ENCODE measurements at regions of chr17 and their contacts with region 1.

Region 1: DNA sequence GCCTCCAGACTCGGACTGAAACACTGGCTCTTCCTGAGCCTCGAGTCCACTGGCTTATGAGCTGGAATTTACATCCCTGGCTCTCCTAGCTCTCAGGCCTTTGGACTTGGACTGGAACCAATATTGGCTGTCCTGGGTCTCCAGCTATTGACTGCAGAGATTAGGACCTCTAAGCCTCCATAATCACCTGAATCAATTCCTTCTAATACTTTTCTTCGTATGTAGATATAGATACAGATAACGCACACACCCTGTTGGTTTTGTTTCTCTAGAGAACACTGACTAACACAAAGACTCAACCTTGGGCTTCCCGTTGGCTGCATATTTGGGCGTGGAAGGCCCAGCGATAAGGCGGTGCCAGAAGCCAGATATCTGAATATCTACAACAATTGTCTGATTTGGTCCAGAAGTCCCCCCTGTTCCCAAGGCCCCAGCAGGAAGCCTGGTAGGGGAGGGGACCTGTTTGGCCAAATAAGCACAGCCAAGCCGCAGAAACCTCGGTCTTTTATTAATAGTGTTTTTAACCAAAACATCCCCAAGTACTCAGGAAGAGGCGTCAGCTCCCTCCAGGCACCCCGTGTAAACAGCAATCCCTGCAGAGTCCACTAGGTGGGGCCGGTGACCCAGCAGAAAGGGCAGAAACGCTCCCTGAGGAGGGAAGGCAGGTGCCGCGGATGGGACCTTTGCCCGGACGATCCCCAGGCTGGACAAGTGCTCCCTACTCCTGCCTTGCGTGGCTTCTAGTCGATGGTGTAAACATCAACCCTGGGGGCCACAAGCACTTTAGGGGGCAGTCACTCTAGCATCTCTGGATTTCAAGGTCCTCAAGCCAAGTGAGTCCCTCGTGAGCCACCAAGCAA is 57.0 kb downstream of the ABR start:
- DNase-seq: peak; percentile 94

Region 2: GRCh38 chr17:1147661-1148060 is 24.9 kb after region 1 on chr17:
- intact Hi-C with region 1: loop called (anchors 1 kb)
- DNase-seq: no peak

Region 3: DNA sequence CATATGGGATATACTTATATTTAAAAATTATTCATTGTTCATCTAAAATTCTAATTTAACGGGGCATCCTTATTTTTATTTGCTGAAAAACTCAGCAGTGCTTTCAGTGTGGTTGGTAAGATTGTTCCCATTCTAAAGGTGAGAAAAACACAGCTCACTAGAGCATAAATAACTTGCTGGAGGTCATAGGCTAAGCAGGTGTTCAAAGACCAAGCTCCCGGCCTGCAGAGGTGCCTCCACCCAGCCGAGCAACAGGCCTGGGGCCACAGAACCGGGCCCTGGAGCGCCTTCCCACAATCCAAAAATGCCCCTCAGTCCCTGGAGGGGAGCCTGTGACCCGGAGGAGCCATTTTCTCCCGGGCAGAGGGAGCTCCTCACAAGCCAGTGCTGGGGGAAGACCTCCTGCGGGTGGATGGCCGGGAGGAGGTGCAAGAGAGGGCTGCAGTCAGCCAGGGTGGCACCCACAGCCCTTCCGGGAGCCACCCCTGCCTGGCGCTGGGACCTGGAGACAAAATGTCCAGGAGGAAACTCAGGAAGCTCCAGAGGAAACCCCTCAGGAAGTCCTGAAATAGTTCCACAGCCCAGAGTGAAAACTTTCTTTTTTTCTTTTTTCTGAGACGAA is 42.3 kb after region 1 on chr17:
- intact Hi-C with region 1: loop called (anchors 5 kb)
- DNase-seq: no peak

Region 4: GRCh38 chr17:1186923-1187771 is 64.4 kb after region 1 on chr17:
- intact Hi-C with region 1: loop called (anchors 1 kb)
- DNase-seq: peak; percentile 94

Region 5: DNA sequence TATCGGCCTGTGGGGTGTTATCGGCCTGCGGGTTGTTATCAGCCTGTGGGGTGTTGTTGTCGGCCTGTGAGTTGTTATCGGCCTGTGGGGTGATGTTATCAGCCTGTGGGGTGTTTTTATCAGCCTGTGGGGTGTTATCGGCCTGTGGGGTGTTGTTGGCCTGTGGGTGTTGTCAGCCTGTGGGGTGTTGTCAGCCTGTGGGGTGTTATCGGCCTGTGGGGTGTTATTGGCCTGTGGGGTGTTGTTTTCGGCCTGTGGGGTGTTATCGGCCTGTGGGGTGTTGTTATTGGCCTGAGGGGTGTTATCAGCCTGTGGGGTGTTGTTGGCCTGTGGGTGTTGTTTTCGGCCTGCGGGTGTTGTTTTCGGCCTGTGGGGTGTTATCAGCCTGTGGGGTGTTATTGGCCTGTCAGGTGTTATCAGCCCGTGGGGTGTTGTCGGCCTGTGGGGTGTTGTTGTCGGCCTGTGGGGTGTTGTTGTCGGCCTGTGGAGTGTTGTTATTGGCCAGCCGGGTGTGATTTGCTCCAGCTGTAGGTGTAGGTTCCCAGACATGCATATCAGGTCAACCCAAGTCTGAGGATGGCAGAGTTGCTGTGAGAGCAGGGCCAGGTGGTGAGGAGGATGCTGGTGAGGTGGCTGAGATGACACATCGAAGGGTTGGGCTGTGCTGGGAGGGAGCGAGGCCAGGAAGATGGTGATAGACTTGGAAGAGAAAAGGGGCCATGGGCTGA is 163.8 kb after region 1 on chr17:
- intact Hi-C with region 1: no loop called
- DNase-seq: no peak